ENCODE measurements at regions of chr2 and their contacts with region 1.

Region 1: DNA sequence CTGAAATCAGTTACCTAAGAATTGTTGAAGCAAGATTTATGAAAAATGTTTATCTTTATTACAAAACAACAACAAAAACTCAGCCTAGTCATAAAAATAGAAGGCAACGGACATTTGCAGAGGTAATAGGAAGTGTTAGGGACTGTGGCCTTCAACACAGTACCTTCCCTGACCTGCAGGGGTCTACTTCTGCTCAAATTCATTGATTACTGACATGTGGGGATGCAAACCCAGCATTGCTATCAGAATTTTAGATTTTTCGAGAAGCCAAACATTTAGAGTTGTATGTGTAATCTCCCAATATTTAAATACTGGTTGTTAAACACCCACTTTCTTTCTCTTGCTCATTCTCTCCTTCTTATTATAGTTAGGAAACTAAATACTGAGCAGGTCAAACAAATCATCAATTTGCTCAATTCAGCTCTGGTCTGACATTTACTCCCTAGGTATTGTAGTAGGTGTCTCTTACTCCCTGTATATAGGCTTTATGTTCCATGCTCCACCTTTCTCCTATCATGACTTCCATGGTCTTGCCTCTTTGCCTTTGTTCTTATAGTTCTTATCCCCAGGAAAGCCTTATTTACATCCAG is 198.5 kb downstream of the UBE2E3 start:
- DNase-seq: no peak
- CTCF ChIP-seq: peak; percentile 27

Region 2: DNA sequence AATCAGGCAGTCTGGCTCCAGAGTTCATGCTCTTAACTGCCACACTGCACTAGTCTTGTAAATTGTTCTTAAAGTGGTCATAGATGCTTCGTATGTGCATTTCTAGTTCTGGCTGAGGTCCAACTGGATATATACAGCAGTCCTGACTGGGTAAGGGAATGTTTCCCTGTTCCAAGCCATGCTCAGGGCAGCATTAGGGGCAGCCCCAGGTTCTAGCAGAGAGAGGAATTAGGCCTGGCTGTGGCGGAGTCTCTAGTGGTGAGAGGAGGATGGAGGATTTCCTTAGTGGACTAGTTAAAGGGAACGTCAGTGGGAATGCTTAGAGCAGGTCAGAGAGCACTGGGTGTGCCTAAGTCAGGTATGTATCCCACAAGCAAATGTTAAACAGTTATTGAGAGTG is 170.5 kb before region 1 on chr2:
- CTCF ChIA-PET with region 1: no interaction called
- POLR2A ChIA-PET with region 1: no interaction called
- DNase-seq: no peak
- CTCF ChIP-seq: no peak

Region 3: GRCh38 chr2:181165199-181165868 is 13.6 kb before region 1 on chr2:
- CTCF ChIA-PET with region 1: interaction called, 12 read pairs
- POLR2A ChIA-PET with region 1: no interaction called
- DNase-seq: no peak
- CTCF ChIP-seq: no peak

Measured in GM10248 (cell line).